ENCODE measurements at regions of chr12 and their contacts with region 1.

Region 1: GRCh38 chr12:120469450-120470149 is at the start of gene SRSF9:
- DNase-seq: peak; percentile 80
- ATAC-seq: peak; percentile 89
- H3K4me3 ChIP-seq: peak within 1 kb of the TSS; percentile 87
- H3K27ac ChIP-seq: peak within 1 kb of the TSS; percentile 80
- H3K4me1 ChIP-seq: peaks cover 16% of the 10 kb centered on the region
- H3K27me3 ChIP-seq: no peaks in the 10 kb centered on the region
- CTCF ChIP-seq: peak; percentile 92 to 99 (median 96)
- EP300 ChIP-seq: no peak
- POLR2A ChIP-seq: peak; percentile 91
- RAD21 ChIP-seq: no peak
- polyA plus RNA-seq, gene SRSF9: 56.2 to 96.4 TPM

Region 2: GRCh38 chr12:119667577-119668323 is 801.9 kb before region 1 on chr12 and contains the start of gene PRKAB1:
- CTCF ChIA-PET with region 1: no interaction called
- POLR2A ChIA-PET with region 1: no interaction called
- RAD21 ChIA-PET with region 1: no interaction called
- SMC1A ChIA-PET with region 1: no interaction called
- in situ Hi-C with region 1: no loop called
- intact Hi-C with region 1: no loop called
- DNase-seq: peak; percentile 89
- ATAC-seq: peak; percentile 91
- H3K4me3 ChIP-seq: peak within 1 kb of the TSS; percentile 98
- H3K27ac ChIP-seq: peak within 1 kb of the TSS; percentile 97
- H3K4me1 ChIP-seq: peaks cover 21% of the 10 kb centered on the region
- H3K27me3 ChIP-seq: no peaks in the 10 kb centered on the region
- CTCF ChIP-seq: peak; percentile 78 to 97 (median 93); a peak in 4 of 6 replicates
- EP300 ChIP-seq: peak in 1 of 2 experiments; percentile 36; a peak in 1 of 4 replicates
- POLR2A ChIP-seq: peak; percentile 97
- RAD21 ChIP-seq: peak; percentile 51
- polyA plus RNA-seq, gene PRKAB1: 24.6 to 28.8 TPM

Region 3: GRCh38 chr12:120437754-120438494 is 31.7 kb before region 1 on chr12 and contains the start of gene COX6A1:
- CTCF ChIA-PET with region 1: interaction called, 35 read pairs
- POLR2A ChIA-PET with region 1: interaction called, 5 read pairs
- RAD21 ChIA-PET with region 1: interaction called, 3 read pairs
- SMC1A ChIA-PET with region 1: interaction called, 6 read pairs
- in situ Hi-C with region 1: no loop called
- intact Hi-C with region 1: loop called (anchors 2 kb)
- DNase-seq: peak; percentile 99
- ATAC-seq: peak; percentile 97
- H3K4me3 ChIP-seq: peak within 1 kb of the TSS; percentile 89
- H3K27ac ChIP-seq: peak within 1 kb of the TSS; percentile 53
- H3K4me1 ChIP-seq: no peaks in the 10 kb centered on the region; the same call in 1 of the 2 replicates
- H3K27me3 ChIP-seq: no peaks in the 10 kb centered on the region
- CTCF ChIP-seq: peak in 2 of 3 experiments; percentile 18 to 32; a peak in 1 of 6 replicates
- EP300 ChIP-seq: 0 out of 4 replicates have a peak, but pooled peaks of 1 of the 2 experiments have one; percentile 27
- POLR2A ChIP-seq: peak; percentile 87
- RAD21 ChIP-seq: no peak
- polyA plus RNA-seq, gene COX6A1: 2,509 to 2,723 TPM

Region 4: DNA sequence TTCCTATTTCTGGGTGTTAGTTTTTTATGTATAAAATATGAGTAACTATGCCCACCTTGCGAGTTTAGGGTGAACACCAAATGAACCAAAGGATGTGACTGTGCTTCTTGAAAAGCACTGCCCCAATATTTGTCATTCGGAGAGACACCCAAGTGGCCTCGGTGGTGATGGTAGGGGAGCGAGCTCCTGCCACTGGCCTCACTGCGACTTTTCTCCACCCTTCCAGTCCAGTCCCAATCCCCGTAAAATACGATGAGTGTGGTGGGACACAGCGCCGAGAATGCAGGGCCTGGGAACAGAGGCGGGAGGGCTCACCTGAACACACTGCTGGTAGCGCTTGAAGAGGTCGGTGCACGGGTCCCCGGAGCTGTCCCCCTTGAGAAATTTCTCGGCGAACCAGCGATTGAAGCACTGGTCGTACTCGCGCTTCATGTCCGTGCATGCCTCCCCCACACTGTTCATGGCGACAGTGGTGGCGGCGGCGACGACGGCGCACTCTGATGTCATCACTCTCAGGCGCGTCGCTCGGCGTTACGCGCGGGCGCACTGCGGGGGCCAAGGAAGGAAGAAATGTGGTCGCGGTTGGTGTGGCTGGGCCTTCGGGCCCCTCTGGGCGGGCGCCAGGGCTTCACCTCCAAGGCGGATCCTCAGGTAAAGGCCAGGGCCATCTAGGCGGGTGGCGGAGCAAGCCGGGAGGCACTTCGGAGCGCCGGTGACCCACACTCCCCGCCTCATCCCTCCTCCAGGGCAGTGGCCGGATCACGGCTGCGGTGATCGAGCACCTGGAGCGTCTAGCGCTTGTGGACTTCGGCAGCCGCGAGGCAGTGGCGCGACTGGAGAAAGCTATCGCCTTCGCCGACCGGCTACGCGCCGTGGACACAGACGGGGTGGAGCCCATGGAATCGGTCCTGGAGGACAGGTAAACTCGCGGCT is 23.4 kb before region 1 on chr12 and contains the starts of genes GATC and TRIAP1:
- CTCF ChIA-PET with region 1: interaction called, 15 read pairs
- POLR2A ChIA-PET with region 1: no interaction called
- RAD21 ChIA-PET with region 1: interaction called, 3 read pairs
- SMC1A ChIA-PET with region 1: interaction called, 6 read pairs
- in situ Hi-C with region 1: no loop called
- intact Hi-C with region 1: loop called (anchors 2 kb)
- DNase-seq: peak; percentile 47
- ATAC-seq: peak; percentile 96
- H3K4me3 ChIP-seq: peak within 1 kb of the TSS; percentile 98
- H3K27ac ChIP-seq: peak within 1 kb of the TSS; percentile 89
- H3K4me1 ChIP-seq: peaks cover 9% of the 10 kb centered on the region; the same call in 1 of the 2 replicates
- H3K27me3 ChIP-seq: no peaks in the 10 kb centered on the region
- CTCF ChIP-seq: no peak
- EP300 ChIP-seq: 0 out of 4 replicates have a peak, but pooled peaks of 1 of the 2 experiments have one; percentile 39
- POLR2A ChIP-seq: peak; percentile 97
- RAD21 ChIP-seq: no peak
- polyA plus RNA-seq, gene GATC: 5.1 to 9.6 TPM
- polyA plus RNA-seq, gene TRIAP1: 308 to 346 TPM

Region 5: GRCh38 chr12:120453977-120454376 is 15.6 kb before region 1 on chr12:
- CTCF ChIA-PET with region 1: interaction called, 39 read pairs
- POLR2A ChIA-PET with region 1: interaction called, 4 read pairs
- RAD21 ChIA-PET with region 1: no interaction called
- SMC1A ChIA-PET with region 1: interaction called, 4 read pairs
- in situ Hi-C with region 1: no loop called
- intact Hi-C with region 1: no loop called
- DNase-seq: no peak
- ATAC-seq: peak; percentile 92
- H3K4me3 ChIP-seq: no peak overlapping the region
- H3K27ac ChIP-seq: no peak overlapping the region
- H3K4me1 ChIP-seq: no peaks in the 10 kb centered on the region
- H3K27me3 ChIP-seq: no peaks in the 10 kb centered on the region
- CTCF ChIP-seq: peak; percentile 55 to 74 (median 62)
- EP300 ChIP-seq: no peak
- POLR2A ChIP-seq: no peak
- RAD21 ChIP-seq: peak; percentile 40; the same call in 1 of the 2 replicates

Region 6: DNA sequence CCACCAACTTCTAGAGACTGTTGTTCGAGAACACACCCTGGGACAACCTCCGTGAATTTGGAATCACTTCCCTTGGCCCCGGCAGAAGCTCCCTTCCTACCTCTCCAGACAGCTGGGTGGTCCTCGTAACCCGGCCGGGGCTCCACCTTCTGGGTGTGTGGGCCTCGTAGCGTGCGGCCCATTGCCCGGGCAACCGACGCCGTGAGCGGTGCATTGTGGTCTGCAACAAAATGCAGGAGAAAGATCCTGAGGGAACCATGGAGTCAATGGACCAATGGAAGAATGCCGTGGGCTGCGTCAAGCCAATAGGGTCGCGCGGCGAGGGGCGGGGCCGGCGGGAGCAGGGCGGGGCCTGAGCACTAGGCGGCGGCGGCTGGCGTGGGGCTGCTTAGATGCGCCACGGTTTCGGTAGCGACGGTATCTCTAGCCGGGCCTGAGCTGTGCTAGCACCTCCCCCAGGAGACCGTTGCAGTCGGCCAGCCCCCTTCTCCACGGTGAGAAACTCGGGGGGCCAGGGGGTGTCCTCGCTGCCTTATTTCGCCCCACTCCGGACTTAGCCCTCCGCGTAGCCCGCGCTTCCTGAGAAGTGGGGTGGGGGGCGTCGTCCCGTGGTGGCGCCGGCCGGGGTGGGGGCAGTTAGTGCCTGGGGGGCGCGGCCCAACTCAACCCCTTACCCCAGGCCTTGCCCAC is 26.3 kb after region 1 on chr12 and contains the start of gene DYNLL1:
- CTCF ChIA-PET with region 1: interaction called, 9 read pairs
- POLR2A ChIA-PET with region 1: interaction called, 8 read pairs
- RAD21 ChIA-PET with region 1: interaction called, 8 read pairs
- SMC1A ChIA-PET with region 1: interaction called, 10 read pairs
- in situ Hi-C with region 1: no loop called
- intact Hi-C with region 1: loop called (anchors 2 kb)
- DNase-seq: peak; percentile 93
- ATAC-seq: peak; percentile 97
- H3K4me3 ChIP-seq: peak within 1 kb of the TSS; percentile 99
- H3K27ac ChIP-seq: peak within 1 kb of the TSS; percentile 77
- H3K4me1 ChIP-seq: peaks cover 4% of the 10 kb centered on the region
- H3K27me3 ChIP-seq: no peaks in the 10 kb centered on the region
- CTCF ChIP-seq: no peak
- EP300 ChIP-seq: peak in 1 of 2 experiments; percentile 13; a peak in 1 of 4 replicates
- POLR2A ChIP-seq: peak; percentile 97
- RAD21 ChIP-seq: no peak
- polyA plus RNA-seq, gene DYNLL1: 744 to 796 TPM

Region 7: GRCh38 chr12:120534203-120534702 is 64.7 kb after region 1 on chr12 and contains the start of gene RNF10:
- CTCF ChIA-PET with region 1: interaction called, 4 read pairs
- POLR2A ChIA-PET with region 1: interaction called, 5 read pairs
- RAD21 ChIA-PET with region 1: interaction called, 4 read pairs
- SMC1A ChIA-PET with region 1: interaction called, 5 read pairs
- in situ Hi-C with region 1: no loop called
- intact Hi-C with region 1: loop called (anchors 1 kb)
- DNase-seq: peak; percentile 68
- ATAC-seq: peak; percentile 78
- H3K4me3 ChIP-seq: peak within 1 kb of the TSS; percentile 70
- H3K27ac ChIP-seq: peak within 1 kb of the TSS; percentile 75
- H3K4me1 ChIP-seq: peaks cover 25% of the 10 kb centered on the region
- H3K27me3 ChIP-seq: no peaks in the 10 kb centered on the region
- CTCF ChIP-seq: no peak
- EP300 ChIP-seq: no peak
- POLR2A ChIP-seq: peak; percentile 95
- RAD21 ChIP-seq: no peak
- polyA plus RNA-seq, gene RNF10: 55.3 to 58.3 TPM